ENCODE measurements at regions of chr1 and their contacts with region 1.

Region 1: DNA sequence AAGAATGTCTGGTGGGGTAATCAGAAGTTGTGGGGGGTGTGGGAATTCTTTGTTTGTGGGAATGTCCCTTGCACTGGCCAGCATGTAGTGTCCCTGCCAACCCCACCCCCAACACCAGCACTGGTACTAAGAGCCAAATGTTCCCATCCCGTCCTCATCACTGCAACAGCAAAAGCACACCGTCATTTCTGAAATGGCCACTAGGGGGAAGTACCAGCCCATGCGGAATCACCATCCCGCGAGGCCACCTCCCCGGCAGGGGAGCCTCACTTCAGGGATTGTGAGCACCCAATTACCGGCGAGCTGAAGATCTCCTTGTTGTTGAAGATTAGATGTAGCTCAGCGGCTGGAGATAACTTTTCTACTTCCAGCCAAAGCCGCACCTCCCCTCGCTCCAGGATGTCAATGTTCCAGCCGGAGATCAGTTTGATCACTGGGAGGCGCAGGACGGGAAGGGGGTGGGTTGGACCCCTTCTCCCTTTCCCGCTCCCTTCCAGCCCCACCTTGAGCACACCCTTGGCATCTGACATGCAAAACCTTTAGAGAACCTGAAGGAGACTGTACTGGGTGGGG is 41.0 kb downstream of the MYOM3 start:
- DNase-seq: peak; percentile 71
- ATAC-seq: peak; percentile 99
- H3K4me3 ChIP-seq: no peak overlapping the region
- H3K27ac ChIP-seq: no peak overlapping the region
- H3K4me1 ChIP-seq: no peaks in the 10 kb centered on the region
- H3K27me3 ChIP-seq: peaks cover 30% of the 10 kb centered on the region; the same call in 1 of the 2 replicates
- CTCF ChIP-seq: peak; percentile 90
- POLR2A ChIP-seq: no peak
- RAD21 ChIP-seq: peak; percentile 88

Region 2: DNA sequence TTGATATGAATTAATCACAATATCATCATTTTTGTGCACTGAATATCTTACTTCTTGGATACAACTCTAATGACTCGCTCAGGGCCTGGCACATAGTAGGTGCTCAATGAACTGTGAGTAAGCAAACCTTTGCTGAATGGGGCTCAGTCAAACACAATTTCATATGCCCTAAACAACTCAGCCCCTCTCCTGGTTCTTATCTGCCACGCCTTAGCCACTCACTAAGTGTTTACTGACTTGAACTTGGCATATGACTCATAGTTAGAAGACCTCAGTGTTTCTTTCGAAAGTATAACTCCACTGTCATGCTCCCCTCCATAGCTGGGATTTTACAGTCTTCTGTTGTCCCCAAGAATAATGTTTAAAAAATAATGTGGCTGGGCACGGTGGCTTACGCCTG is 121.0 kb after region 1 on chr1:
- CTCF ChIA-PET with region 1: no interaction called
- POLR2A ChIA-PET with region 1: no interaction called
- dilution Hi-C with region 1: no loop called
- in situ Hi-C with region 1: no loop called
- intact Hi-C with region 1: loop called (anchors 1 kb)
- DNase-seq: peak; percentile 66
- ATAC-seq: peak; percentile 73
- H3K4me3 ChIP-seq: no peak overlapping the region
- H3K27ac ChIP-seq: no peak overlapping the region
- H3K4me1 ChIP-seq: peaks cover 4% of the 10 kb centered on the region
- H3K27me3 ChIP-seq: peaks cover 14% of the 10 kb centered on the region
- CTCF ChIP-seq: no peak
- POLR2A ChIP-seq: no peak
- RAD21 ChIP-seq: no peak

Region 3: GRCh38 chr1:24391882-24392603 is 321.1 kb after region 1 on chr1:
- CTCF ChIA-PET with region 1: no interaction called
- POLR2A ChIA-PET with region 1: no interaction called
- dilution Hi-C with region 1: no loop called
- in situ Hi-C with region 1: no loop called
- intact Hi-C with region 1: loop called (anchors 1 kb)
- DNase-seq: peak; percentile 51
- ATAC-seq: peak; percentile 71
- H3K4me3 ChIP-seq: no peak overlapping the region
- H3K27ac ChIP-seq: no peak overlapping the region
- H3K4me1 ChIP-seq: peaks cover 6% of the 10 kb centered on the region
- H3K27me3 ChIP-seq: no peaks in the 10 kb centered on the region
- CTCF ChIP-seq: peak; percentile 77
- POLR2A ChIP-seq: no peak
- RAD21 ChIP-seq: peak; percentile 83

Region 4: DNA sequence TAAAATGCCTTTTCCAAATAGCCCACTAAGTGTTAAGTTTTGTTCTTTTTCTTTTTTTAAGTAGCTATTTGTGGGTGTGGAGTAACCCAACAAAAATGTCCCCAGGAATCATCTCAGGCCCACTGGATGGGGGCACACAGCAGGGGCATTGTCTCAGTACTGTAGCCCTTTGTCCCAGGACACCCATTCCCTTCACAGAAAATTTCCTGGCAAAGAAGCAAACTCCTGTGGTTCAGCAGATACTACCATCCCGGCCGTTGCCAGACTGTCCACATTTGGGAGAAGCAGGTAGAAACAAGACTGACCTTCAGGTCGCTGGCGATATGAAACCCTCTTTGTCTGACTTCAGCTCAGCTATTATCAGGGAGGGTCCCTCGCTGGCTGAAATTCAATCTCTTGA is 548.5 kb after region 1 on chr1:
- CTCF ChIA-PET with region 1: no interaction called
- POLR2A ChIA-PET with region 1: no interaction called
- dilution Hi-C with region 1: no loop called
- in situ Hi-C with region 1: no loop called
- intact Hi-C with region 1: loop called (anchors 5 kb)
- DNase-seq: no peak
- ATAC-seq: no peak
- H3K4me3 ChIP-seq: no peak overlapping the region
- H3K27ac ChIP-seq: no peak overlapping the region
- H3K4me1 ChIP-seq: no peaks in the 10 kb centered on the region
- H3K27me3 ChIP-seq: peaks cover 19% of the 10 kb centered on the region
- CTCF ChIP-seq: no peak
- POLR2A ChIP-seq: no peak
- RAD21 ChIP-seq: no peak